Left ventricle myocardium superior (tissue), 1 donor: ENCODE measurements at regions of chr5 and their contacts with region 1.

Region 1: GRCh38 chr5:69326363-69326762 is 6.2 kb downstream of the CCDC125 start:
- DNase-seq: no peak
- ATAC-seq: no peak

Region 2: DNA sequence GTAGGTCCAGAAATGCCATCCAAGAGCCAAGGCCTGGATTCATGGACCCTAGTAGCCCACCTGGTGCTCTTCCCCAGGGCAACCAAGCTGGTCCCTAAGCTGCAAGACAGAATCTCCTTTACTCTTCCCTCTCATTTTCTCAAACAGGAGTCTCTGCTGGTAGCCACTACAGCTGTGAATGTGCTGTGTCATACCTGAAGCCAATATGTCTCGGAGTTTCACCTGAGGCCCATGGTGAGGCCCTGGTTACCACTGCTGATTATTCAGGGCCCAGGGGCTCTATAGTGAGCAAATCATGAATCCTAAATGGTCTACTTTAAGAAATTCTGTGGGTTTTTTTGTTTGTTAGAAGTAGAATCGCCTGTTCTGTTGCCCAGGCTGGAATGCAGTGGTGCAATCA is 75.8 kb before region 1 on chr5:
- intact Hi-C with region 1: no loop called
- DNase-seq: no peak
- ATAC-seq: no peak

Region 3: DNA sequence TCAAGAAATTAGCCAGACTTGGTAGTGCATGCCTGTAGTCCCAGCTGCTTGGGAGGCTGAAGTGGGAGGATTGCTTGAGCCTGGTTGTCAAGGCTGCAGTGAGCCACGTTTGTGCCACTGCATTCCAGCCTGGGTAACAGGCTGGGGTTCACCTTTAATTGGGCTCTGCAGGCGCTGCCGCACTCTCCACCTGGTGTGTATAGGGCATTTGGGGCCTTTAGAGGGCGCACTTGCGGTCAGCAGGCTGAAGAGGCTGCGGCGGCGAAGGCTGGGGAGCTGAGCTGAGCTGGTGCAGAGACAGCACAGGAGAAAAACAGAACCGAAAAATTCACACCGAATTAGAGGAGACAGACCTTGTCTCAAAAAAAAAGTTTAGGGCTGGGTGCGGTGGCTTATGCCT is 60.4 kb before region 1 on chr5:
- intact Hi-C with region 1: loop called (anchors 10 kb)
- DNase-seq: no peak
- ATAC-seq: no peak